ENCODE measurements at regions of chr1 and their contacts with region 1.

Region 1: DNA sequence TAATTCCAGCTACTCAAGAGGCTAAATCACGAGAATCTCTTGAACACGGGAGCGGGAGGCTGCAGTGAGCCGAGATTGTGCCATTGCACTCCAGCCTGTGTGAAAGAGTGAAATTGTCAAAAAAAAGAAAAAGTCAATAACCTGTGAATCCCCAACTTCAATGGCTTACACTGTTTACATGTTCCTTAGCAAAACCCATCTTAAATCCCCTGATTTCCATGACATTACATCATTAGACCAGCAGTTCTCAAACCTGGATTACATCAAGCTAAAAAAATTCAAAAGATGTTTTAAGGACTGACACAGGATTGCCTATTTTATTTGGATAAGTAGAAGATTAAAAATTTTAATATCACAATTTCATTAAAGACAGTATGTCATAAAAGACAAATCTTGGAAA is 12.4 kb downstream of the GPBP1L1 start:
- DNase-seq: no peak
- ATAC-seq: no peak
- H3K4me3 ChIP-seq: no peak overlapping the region
- H3K27ac ChIP-seq: no peak overlapping the region
- H3K4me1 ChIP-seq: peaks cover 15% of the 10 kb centered on the region
- H3K27me3 ChIP-seq: no peaks in the 10 kb centered on the region
- CTCF ChIP-seq: no peak

Region 2: GRCh38 chr1:45630429-45630828 is 43.5 kb before region 1 on chr1:
- CTCF ChIA-PET with region 1: no interaction called
- POLR2A ChIA-PET with region 1: interaction called, 12 read pairs
- in situ Hi-C with region 1: no loop called
- intact Hi-C with region 1: no loop called
- DNase-seq: no peak
- ATAC-seq: no peak
- H3K4me3 ChIP-seq: no peak overlapping the region
- H3K27ac ChIP-seq: no peak overlapping the region
- H3K4me1 ChIP-seq: no peaks in the 10 kb centered on the region
- H3K27me3 ChIP-seq: no peaks in the 10 kb centered on the region
- CTCF ChIP-seq: no peak

Measured in Panc1 (cell line).